ENCODE measurements at regions of chr16 and their contacts with region 1.

Region 1: DNA sequence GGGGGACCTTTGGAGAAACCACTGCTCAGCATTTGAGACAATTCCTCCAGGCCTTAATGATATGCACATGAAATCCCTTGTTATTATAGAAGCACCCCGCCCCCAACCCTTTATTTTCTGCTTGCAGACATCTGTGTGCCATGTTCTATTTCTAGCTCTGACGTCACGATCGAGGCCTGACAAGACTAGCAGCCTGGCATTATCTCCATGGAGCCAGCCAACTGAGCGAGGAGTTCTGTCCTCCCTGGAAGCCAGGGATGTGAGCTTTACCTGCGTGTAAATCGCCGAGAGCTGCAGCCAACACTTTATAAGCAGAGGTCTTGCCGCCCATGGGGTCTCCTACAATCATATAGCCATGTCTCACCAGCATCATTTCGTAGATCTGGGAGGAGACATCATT is 116.9 kb downstream of the DNAH3 start:
- DNase-seq: no peak

Region 2: DNA sequence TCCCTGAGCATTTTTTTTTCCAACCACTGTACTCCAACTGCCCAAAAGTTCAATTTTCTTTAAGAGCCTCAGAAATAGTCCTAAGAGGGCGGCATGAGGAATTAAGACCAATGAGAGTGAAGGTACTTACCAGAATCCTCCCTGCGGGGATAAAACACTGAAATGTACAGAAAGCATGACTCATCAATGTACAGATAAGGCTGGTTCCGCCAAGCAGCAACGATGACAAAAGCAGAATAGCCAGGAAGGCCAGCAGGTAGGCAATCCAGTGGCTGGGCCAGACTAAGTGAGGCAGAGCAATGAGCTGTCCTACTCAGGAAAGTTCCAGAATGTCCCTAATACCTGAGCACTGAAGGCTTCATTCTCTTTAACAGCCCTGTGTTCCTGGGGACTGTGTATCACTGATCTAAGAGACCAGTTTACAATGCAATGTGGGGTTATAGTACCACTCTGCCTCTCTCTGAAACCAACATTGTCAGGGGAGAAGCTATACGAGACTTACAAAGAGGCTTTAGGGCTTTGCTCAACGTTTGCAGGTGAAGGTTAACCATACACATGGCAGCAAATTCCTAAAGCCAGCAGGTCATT is 949.0 kb before region 1 on chr16:
- intact Hi-C with region 1: no loop called
- DNase-seq: no peak

Region 3: DNA sequence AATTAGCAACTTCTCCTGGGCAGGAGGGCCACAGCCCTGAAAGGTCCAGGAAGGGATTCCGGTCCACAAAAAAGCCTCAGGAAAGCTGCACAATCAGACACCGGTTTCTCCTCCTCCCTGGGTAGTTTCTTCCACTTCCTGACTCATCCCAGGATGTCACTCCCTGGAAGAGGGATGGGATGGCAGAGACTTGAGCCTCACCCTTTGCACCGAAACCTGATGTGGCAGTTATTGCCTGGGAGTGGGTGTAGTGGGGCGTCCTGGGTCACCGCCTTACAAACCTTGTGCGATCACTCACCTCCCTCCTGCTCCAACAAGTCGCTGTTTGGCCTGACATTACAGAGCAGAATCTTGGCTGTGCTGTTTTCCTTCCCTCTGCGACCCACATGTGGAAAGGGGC is 62.3 kb before region 1 on chr16:
- intact Hi-C with region 1: no loop called
- DNase-seq: no peak

Region 4: GRCh38 chr16:20987049-20987448 is 46.7 kb before region 1 on chr16:
- intact Hi-C with region 1: no loop called
- DNase-seq: no peak

Region 5: DNA sequence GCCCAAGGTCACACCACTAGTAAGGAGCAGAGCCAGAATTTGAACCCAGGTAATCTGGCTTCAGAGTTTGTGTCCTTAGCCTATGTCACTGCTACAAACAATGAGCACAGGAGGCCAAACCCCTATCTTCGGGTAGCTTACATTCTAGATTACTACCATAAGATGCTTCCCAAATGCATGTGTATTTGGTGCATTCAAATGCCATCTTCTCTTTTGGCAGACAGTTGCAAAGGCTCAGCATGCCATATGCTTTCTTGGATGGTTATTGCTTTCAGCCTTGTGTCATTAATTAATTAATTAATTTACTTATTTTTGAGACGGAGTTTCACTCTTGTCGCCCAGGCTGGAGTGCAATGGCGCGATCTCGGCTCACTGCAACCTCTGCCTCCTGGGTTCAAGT is 36.3 kb after region 1 on chr16:
- intact Hi-C with region 1: loop called (anchors 5 kb)
- DNase-seq: no peak

Region 6: DNA sequence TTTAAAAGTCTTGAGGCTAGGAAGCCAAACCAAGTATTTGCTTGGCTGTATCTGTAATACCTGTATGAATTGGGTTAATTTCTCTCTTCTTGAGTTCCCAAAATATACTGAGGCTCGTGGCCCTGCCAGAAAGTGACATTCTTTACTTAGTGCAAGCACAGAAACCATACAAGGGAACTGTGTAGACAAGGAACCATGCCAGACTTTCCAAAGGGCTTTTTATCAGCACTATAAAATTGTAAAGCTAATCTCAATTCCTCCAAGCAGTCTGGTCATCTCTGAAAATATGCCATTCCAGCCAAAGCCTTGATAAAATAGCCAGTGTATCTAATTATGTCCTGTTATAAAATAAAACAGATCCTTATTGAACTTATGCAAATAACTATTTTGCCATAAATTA is 251.6 kb after region 1 on chr16:
- intact Hi-C with region 1: no loop called
- DNase-seq: no peak

Measured in cardiac septum (tissue), 1 donor.